Left lung (tissue), 14 donors: ENCODE measurements at regions of chr5 and their contacts with region 1.

Region 1: GRCh38 chr5:128228008-128228407 is 144.4 kb downstream of the SLC12A2 start:
- DNase-seq: no peak
- ATAC-seq: peak; percentile 66
- H3K4me3 ChIP-seq: no peak overlapping the region
- H3K27ac ChIP-seq: no peak overlapping the region
- H3K4me1 ChIP-seq: no peaks in the 10 kb centered on the region
- H3K27me3 ChIP-seq: no peaks in the 10 kb centered on the region
- CTCF ChIP-seq: no peak

Region 2: GRCh38 chr5:128844354-128844923 is 616.4 kb after region 1 on chr5:
- intact Hi-C with region 1: loop called in 1 of 2 experiments (anchors 10 kb)
- DNase-seq: peak in 2 of 4 donors; percentile 16 to 28
- ATAC-seq: no peak
- H3K4me3 ChIP-seq: no peak overlapping the region
- H3K27ac ChIP-seq: no peak overlapping the region
- H3K4me1 ChIP-seq: no peaks in the 10 kb centered on the region
- H3K27me3 ChIP-seq: no peaks in the 10 kb centered on the region
- CTCF ChIP-seq: peak in 1 of 2 donors; percentile 23